Lower leg skin (tissue), 4 donors: ENCODE measurements at regions of chr21 and their contacts with region 1.

Region 1: GRCh38 chr21:43874085-43874785 is 9.2 kb downstream of the AGPAT3 start:
- DNase-seq: no peak
- H3K4me3 ChIP-seq: no peak overlapping the region
- CTCF ChIP-seq: no peak
- POLR2A ChIP-seq: no peak

Region 2: DNA sequence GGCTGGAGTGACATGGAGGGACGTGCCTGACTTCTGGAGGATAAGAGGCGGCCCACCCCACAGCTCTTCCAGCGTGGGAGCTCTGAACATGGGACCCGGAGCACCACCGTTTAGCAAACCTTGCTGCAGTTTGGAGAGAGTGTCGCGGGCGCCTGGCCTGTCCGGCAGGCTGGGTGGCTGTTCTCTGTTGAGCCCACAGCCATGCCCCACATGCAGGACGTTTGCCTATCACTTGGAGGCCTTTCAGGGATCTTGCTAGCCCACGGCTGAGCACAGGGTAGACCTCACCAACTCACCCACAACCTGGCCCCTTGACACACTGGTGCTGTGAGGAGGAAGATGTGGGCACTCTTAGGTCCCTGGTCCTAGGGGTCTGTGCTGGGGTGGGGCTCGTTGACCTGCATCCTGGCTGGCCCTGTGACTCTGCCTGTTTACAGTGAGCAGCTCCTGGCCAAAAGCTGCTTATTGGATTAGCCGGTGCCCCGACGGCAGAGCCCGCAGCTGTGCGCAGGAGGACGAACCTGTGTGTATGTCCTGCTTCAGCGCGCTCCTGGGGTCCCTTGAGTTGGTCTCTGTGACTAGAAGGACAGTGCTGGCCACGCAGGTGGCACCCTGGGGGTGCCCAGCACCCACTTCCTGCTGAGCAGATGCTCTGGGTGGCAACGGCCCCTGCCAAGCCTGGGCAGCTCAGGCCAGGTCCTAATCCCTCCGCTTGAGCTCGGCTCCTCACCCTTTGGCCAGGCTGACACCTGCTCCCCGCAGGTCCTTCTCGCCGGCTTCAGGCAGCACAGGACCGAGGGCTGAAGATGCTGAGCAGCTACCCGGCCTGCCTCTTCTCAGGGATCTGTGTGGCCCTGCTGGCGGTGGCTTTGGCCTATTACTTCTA is 65.5 kb after region 1 on chr21:
- intact Hi-C with region 1: loop called (anchors 10 kb)
- DNase-seq: no peak
- H3K4me3 ChIP-seq: no peak overlapping the region
- CTCF ChIP-seq: no peak
- POLR2A ChIP-seq: no peak